Activated naive CD4-positive, alpha-beta T cell treated with anti-CD3 and anti-CD28 coated beads for 36 hours (primary cell): ENCODE measurements at regions of chr11 and their contacts with region 1.

Region 1: DNA sequence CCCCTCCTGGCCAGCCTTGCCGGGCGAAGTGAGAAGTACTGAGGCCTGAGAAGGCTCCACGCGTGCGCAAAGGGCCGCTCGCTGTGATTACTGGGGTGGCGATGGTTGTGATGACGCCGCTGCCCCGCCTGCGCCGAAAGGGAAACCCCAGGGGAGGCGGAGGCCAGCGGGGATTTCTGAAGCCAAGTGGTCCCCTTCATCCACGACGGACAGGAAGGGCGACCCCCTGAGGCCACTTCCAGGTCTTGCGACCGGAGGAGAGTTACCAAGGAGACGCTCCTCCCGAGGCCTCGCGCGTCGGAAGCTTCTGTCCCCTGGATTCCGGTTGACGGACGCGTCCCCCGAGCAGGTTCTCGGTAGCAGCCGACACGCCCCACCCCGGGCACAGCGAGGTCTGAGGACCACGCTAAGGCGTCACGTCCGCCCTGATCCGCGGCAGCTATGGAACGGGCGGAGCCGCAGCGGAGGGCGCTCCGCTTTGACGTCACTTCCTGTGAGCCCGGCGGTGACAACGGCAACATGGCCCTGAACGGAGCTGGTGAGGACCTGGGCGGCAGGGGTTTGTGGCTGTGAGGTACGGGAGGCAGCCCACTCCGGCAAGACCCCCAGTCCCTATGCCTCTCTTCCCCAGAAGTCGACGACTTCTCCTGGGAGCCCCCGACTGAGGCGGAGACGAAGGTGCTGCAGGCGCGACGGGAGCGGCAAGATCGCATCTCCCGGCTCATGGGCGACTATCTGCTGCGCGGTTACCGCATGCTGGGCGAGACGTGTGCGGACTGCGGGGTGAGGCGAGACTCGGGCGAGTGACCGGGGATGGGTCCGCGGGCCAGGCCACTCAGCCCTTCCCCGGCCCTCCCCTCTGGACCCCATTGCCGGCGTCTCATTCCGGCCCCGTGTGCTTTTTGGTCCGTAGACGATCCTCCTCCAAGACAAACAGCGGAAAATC is at the start of gene ZNRD2:
- DNase-seq: peak; percentile 99
- H3K4me3 Mint-ChIP-seq: peak within 1 kb of the TSS; percentile 87
- H3K27ac Mint-ChIP-seq: peak within 1 kb of the TSS; percentile 97
- H3K4me1 Mint-ChIP-seq: peaks cover 61% of the 10 kb centered on the region
- H3K27me3 Mint-ChIP-seq: no peaks in the 10 kb centered on the region
- total RNA-seq, gene ZNRD2: 41.4 to 42.5 TPM

Region 2: DNA sequence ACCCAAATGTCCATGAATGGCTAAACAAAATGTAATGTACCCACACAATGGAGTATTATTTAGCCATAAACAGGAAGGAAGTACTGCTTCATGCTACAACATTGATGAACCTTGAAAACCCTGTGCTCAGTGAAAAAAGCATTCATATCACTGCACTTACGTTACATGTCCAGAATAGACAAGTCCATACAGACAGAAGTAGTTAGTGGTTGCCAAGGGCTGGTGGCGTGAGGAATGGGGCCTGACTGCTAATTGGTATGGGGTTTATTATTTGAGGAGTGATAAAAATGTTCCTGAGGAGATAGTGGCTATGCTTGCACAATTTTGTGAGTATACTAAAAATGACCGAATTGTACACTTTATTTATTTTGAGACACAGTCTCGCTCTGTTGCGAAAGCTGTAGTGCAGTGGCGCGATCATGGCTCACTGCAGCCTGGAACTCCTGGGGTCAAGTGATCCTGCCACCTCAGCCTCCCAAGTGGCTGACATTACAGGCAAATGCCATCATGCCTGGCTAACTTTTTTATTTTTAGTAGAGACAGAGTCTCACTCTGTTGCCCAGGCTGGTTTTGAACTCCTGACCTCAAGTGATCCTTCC is 428.3 kb before region 1 on chr11:
- CTCF ChIA-PET with region 1: no interaction called
- intact Hi-C with region 1: no loop called
- DNase-seq: no peak
- H3K4me3 Mint-ChIP-seq: no peak overlapping the region
- H3K27ac Mint-ChIP-seq: no peak overlapping the region
- H3K4me1 Mint-ChIP-seq: no peaks in the 10 kb centered on the region
- H3K27me3 Mint-ChIP-seq: no peaks in the 10 kb centered on the region

Region 3: DNA sequence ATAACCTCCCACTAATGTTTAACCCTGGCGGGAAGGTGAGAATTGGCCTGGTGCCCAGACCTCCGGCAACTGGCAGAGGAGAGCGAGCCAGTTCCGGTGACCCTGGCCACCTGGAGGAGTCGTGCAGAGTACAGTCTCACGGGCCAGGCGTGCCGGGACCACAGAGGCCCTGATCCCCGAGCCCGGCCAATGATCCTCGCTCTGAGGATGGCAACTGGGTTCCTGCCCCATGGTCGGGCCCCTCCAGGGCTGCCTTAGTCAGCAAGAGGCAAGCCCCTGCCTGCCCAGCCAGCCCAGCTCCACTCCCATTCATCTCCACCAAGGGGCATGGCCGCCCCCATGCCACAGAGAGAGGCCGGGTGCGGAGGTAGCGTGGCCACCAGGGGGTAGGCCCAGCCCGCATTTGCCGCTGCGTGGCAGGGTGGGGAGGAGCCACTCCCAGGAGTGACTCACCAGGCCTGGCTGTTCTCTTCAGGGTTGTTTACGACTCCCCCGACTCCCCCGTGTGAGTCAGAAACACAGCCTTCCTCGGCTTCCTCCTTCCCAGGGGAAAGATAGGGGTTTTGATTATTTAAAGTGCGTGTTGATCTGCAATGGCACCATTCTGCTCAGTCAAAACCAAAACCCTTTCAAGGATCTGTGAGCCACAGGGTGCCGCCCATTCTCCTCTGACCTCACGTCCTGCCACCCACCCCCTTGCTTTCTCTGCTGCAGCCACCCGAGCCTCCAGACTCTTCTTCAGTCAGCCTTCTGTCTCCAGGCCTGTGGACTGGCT is 188.0 kb before region 1 on chr11 and contains the start of gene SLC25A45:
- CTCF ChIA-PET with region 1: interaction called, 3 read pairs
- intact Hi-C with region 1: loop called (anchors 1 kb)
- DNase-seq: peak; percentile 97
- H3K4me3 Mint-ChIP-seq: peak within 1 kb of the TSS; percentile 96
- H3K27ac Mint-ChIP-seq: peak within 1 kb of the TSS; percentile 100
- H3K4me1 Mint-ChIP-seq: peaks cover 48% of the 10 kb centered on the region
- H3K27me3 Mint-ChIP-seq: no peaks in the 10 kb centered on the region
- total RNA-seq, gene SLC25A45: 10.4 to 12.1 TPM

Region 4: DNA sequence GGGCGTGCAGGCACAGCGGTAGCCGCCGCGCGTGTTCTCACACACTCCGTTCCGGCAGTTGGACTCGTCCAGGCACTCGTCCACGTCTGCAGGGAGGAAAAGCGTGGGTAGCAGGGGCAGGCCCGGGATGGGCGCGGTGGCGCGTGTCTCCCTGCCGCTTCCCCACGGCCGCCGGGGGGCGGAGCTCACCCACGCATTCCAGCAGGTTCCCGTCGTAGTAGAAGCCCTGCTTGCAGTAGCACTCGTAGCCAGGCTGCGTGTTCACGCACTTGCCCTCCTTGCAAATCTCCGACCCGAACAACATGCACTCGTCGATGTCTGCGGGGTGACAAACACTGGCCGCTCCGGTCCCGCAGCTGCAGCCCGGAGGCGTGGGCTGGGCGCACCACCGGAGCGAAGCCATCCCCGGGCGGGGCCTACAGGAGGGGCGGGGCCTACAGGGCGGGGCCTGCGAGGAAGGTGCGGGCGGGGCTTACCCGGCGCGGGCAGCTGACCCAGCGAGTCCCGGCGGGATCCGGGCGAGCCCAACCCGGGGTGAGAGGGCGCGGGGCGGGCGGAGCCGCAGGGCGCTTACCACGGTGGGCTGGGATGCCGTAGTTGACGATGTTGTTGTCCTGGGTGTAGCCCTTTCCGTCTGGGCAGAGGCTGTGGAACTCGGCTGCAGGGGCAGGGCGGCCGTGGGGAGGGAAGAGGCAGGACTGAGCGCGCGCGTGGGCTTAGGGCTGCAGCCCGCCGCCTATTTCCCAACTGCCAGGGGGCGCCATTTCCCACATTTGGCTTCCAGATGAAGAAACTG is 29.8 kb before region 1 on chr11:
- CTCF ChIA-PET with region 1: interaction called, 86 read pairs
- intact Hi-C with region 1: loop called (anchors 1 kb)
- DNase-seq: peak; percentile 93
- H3K4me3 Mint-ChIP-seq: peak overlapping the region; percentile 80
- H3K27ac Mint-ChIP-seq: peak overlapping the region; percentile 82
- H3K4me1 Mint-ChIP-seq: peaks cover 16% of the 10 kb centered on the region
- H3K27me3 Mint-ChIP-seq: no peaks in the 10 kb centered on the region

Region 5: DNA sequence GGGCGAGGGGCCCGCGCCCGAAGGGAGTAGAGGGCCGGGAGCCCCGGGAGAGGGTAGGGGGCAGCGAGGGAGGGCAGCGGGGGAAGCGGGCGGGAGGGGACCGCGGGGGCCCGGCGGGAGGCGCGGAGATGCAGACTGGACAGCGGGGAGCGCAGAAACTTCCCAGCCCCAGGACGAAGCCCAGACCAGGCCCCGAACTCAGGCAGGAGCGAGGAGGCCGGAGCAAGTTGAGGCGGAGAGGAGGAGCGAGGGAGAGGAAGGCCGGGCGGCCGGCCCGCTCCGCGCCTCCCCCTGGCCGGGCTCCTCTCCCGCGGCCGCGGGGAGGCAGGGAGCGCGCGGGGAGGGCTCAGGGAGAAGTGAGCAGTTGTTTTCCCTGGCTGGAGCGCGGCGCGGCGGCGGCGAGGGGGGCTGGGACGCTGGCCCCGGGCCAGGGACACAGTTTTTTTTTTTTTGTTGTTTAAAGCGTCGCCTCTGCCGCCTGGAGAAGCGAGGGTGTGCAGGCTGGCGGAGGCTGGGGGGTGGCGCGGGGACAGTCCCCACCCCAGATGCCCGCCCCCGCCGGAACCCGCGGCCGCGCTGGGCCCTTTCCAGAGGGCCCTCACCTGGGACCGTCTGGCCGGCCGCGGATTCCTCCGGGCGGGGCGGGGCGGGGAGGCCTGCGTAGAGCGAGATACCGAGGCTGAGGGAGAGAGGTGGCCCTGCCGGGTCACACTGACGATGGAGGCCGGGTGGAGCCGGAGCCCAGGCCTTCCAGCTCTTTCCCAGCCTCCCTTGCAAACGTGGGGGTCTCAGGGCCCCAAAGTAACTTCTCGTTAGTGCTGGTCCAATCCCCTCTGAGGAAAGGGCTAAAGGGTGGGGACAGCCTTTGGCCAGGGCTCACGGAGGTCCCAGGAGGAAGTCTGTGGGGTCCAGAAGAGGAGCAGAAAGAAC is 12.0 kb before region 1 on chr11 and contains the start of gene LTBP3:
- CTCF ChIA-PET with region 1: interaction called, 20 read pairs
- intact Hi-C with region 1: loop called (anchors 1 kb)
- DNase-seq: no peak
- H3K4me3 Mint-ChIP-seq: peak within 1 kb of the TSS; percentile 77
- H3K27ac Mint-ChIP-seq: peak within 1 kb of the TSS; percentile 91
- H3K4me1 Mint-ChIP-seq: peaks cover 53% of the 10 kb centered on the region
- H3K27me3 Mint-ChIP-seq: no peaks in the 10 kb centered on the region
- total RNA-seq, gene LTBP3: 39.7 to 45.7 TPM

Region 6: GRCh38 chr11:65615229-65615941 is 45.1 kb after region 1 on chr11 and contains the start of gene PCNX3:
- CTCF ChIA-PET with region 1: interaction called, 5 read pairs
- intact Hi-C with region 1: loop called (anchors 1 kb)
- DNase-seq: peak; percentile 100
- H3K4me3 Mint-ChIP-seq: peak within 1 kb of the TSS; percentile 95
- H3K27ac Mint-ChIP-seq: peak within 1 kb of the TSS; percentile 98
- H3K4me1 Mint-ChIP-seq: peaks cover 54% of the 10 kb centered on the region
- H3K27me3 Mint-ChIP-seq: no peaks in the 10 kb centered on the region
- total RNA-seq, gene PCNX3: 21.6 to 24.7 TPM

Region 7: GRCh38 chr11:65662799-65663638 is 92.8 kb after region 1 on chr11 and contains the start of gene RELA:
- CTCF ChIA-PET with region 1: no interaction called
- intact Hi-C with region 1: loop called (anchors 1 kb)
- DNase-seq: peak; percentile 95
- H3K4me3 Mint-ChIP-seq: peak within 1 kb of the TSS; percentile 85
- H3K27ac Mint-ChIP-seq: peak within 1 kb of the TSS; percentile 94
- H3K4me1 Mint-ChIP-seq: peaks cover 37% of the 10 kb centered on the region
- H3K27me3 Mint-ChIP-seq: no peaks in the 10 kb centered on the region
- total RNA-seq, gene RELA: 66.9 to 68.5 TPM

Region 8: GRCh38 chr11:65844231-65845190 is 274.3 kb after region 1 on chr11:
- CTCF ChIA-PET with region 1: no interaction called
- intact Hi-C with region 1: no loop called
- DNase-seq: no peak
- H3K4me3 Mint-ChIP-seq: no peak overlapping the region
- H3K27ac Mint-ChIP-seq: no peak overlapping the region
- H3K4me1 Mint-ChIP-seq: no peaks in the 10 kb centered on the region
- H3K27me3 Mint-ChIP-seq: no peaks in the 10 kb centered on the region

Region 9: GRCh38 chr11:66268283-66268951 is 698.2 kb after region 1 on chr11 and contains the start of gene RAB1B:
- CTCF ChIA-PET with region 1: no interaction called
- intact Hi-C with region 1: loop called (anchors 5 kb)
- DNase-seq: peak; percentile 100
- H3K4me3 Mint-ChIP-seq: peak within 1 kb of the TSS; percentile 95
- H3K27ac Mint-ChIP-seq: peak within 1 kb of the TSS; percentile 95
- H3K4me1 Mint-ChIP-seq: peaks cover 26% of the 10 kb centered on the region
- H3K27me3 Mint-ChIP-seq: no peaks in the 10 kb centered on the region
- total RNA-seq, gene RAB1B: 112 to 115 TPM